Uterus (tissue), 4 donors: ENCODE measurements at regions of chr11 and their contacts with region 1.

Region 1: GRCh38 chr11:8564526-8564925 is 29.5 kb downstream of the STK33 start:
- DNase-seq: no peak
- H3K4me3 ChIP-seq: no peak overlapping the region
- H3K27ac ChIP-seq: no peak overlapping the region
- H3K4me1 ChIP-seq: no peaks in the 10 kb centered on the region
- H3K27me3 ChIP-seq: no peaks in the 10 kb centered on the region
- CTCF ChIP-seq: no peak
- POLR2A ChIP-seq: no peak

Region 2: DNA sequence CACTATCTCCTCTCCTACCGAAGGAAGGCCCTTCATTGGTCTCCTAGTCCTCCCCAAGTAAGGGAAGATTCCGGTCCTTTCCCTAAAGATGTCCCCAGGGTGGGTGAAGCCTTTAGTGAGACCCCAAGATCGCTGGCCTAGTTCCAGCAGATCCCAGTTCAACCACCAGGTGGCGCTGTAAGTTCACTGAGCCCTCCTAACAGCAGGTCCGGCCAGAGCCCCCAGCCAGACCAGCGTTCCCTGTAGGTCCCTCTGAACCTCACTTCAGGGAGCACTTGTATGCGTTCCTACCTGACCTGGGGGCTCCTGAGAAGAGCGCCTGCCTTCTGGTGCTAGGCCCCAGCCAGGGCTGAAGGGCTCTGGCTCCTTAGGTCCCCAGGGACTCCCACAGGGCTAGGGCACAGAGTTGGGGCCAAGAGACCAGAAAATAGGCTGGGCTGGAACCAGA is 338.9 kb before region 1 on chr11:
- intact Hi-C with region 1: loop called (anchors 5 kb)
- DNase-seq: peak; percentile 70 to 75
- H3K4me3 ChIP-seq: no peak overlapping the region
- H3K27ac ChIP-seq: no peak overlapping the region
- H3K4me1 ChIP-seq: no peaks in the 10 kb centered on the region
- H3K27me3 ChIP-seq: no peaks in the 10 kb centered on the region
- CTCF ChIP-seq: peak; percentile 83 to 95 (median 86)
- POLR2A ChIP-seq: no peak

Region 3: GRCh38 chr11:8426076-8426475 is 138.4 kb before region 1 on chr11:
- intact Hi-C with region 1: no loop called
- DNase-seq: no peak
- H3K4me3 ChIP-seq: no peak overlapping the region
- H3K27ac ChIP-seq: no peak overlapping the region
- H3K4me1 ChIP-seq: no peaks in the 10 kb centered on the region
- H3K27me3 ChIP-seq: no peaks in the 10 kb centered on the region
- CTCF ChIP-seq: no peak
- POLR2A ChIP-seq: no peak

Region 4: GRCh38 chr11:8722101-8722500 is 157.6 kb after region 1 on chr11:
- intact Hi-C with region 1: no loop called
- DNase-seq: peak in 1 of 2 donors; percentile 55
- H3K4me3 ChIP-seq: no peak overlapping the region
- H3K27ac ChIP-seq: peak overlapping the region; percentile 94 to 99
- H3K4me1 ChIP-seq: peaks cover 16 to 47% of the 10 kb centered on the region in 2 donors
- H3K27me3 ChIP-seq: no peaks in the 10 kb centered on the region
- CTCF ChIP-seq: no peak
- POLR2A ChIP-seq: no peak

Region 5: GRCh38 chr11:8744423-8744822 is 179.9 kb after region 1 on chr11:
- intact Hi-C with region 1: no loop called
- DNase-seq: no peak
- H3K4me3 ChIP-seq: no peak overlapping the region
- H3K27ac ChIP-seq: peak overlapping the region in 1 of 2 donors; percentile 37
- H3K4me1 ChIP-seq: peaks cover 10 to 12% of the 10 kb centered on the region in 2 donors
- H3K27me3 ChIP-seq: no peaks in the 10 kb centered on the region
- CTCF ChIP-seq: no peak
- POLR2A ChIP-seq: no peak